ENCODE measurements at regions of chr6 and their contacts with region 1.

Region 1: GRCh38 chr6:161370880-161371279 is 97.0 kb upstream of the AGPAT4 start:
- DNase-seq: peak; percentile 77 to 89 (median 84)
- ATAC-seq: peak; percentile 76
- H3K4me3 ChIP-seq: no peak overlapping the region
- H3K27ac ChIP-seq: no peak overlapping the region
- H3K4me1 ChIP-seq: peaks cover 11% of the 10 kb centered on the region in 2 experiments; a peak in 4 of 5 replicates
- H3K27me3 ChIP-seq: no peaks in the 10 kb centered on the region; a peak in 1 of 5 replicates
- CTCF ChIP-seq: peak; percentile 93 to 98 (median 98)
- EP300 ChIP-seq: no peak
- POLR2A ChIP-seq: no peak
- RAD21 ChIP-seq: peak; percentile 98 to 99

Region 2: DNA sequence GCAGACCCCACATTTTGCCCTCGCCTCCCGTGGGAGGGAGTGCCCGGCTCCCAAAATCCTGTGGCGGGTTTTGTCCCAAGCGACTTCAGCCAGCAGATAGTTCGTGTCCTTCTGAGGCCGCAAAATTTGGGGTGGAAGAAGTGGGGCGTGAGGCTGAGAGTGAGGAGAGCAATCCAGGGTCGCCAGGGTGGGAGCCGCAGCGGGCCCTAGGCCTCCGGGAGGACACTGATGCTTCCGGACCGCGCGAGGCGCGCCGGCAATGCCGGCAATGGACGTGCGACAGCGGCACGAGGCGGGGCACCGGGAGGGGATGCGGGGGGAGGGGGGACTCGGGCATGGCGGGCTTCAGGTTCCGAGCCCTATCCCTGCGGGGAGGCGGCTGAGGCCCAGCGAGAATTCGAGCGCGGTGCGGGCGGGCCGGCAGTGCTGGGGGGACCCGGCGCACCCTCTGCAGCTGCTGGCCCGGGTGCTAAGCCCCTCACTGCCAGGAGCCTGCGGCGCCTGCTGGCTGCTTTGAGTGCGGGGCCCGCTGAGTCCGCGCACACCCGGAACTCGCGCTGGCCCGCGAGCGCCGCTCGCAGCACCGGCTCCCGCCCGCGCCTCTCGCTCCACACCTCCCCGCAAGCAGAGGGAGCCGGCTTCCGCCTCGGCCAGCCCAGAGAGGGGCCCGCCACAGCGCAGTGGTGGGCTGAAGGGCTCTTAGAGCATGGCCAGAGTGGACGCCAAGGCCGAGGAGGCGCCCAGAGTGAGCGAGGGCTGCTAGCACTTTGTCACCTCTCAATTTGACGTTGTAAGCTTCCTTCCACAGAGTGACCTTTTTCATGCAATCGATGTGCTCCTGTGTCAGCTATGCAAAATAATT is 850.6 kb before region 1 on chr6:
- CTCF ChIA-PET with region 1: interaction called, 4 read pairs
- POLR2A ChIA-PET with region 1: no interaction called
- in situ Hi-C with region 1: loop called (anchors 10 kb)
- intact Hi-C with region 1: loop called (anchors 2 kb)
- DNase-seq: peak; percentile 84 to 86 (median 85)
- ATAC-seq: peak; percentile 94
- H3K4me3 ChIP-seq: peak overlapping the region; percentile 54
- H3K27ac ChIP-seq: peak overlapping the region; percentile 43; the same call in 2 of the 3 replicates
- H3K4me1 ChIP-seq: peaks cover 3 to 9% of the 10 kb centered on the region in 2 experiments; a peak in 3 of 5 replicates
- H3K27me3 ChIP-seq: no peaks in the 10 kb centered on the region
- CTCF ChIP-seq: peak; percentile 4 to 58 (median 32); a peak in 5 of 6 replicates
- EP300 ChIP-seq: no peak; the same call in 1 of the 2 replicates
- POLR2A ChIP-seq: peak; percentile 65; the same call in 1 of the 2 replicates
- RAD21 ChIP-seq: peak; percentile 85 to 90

Region 3: DNA sequence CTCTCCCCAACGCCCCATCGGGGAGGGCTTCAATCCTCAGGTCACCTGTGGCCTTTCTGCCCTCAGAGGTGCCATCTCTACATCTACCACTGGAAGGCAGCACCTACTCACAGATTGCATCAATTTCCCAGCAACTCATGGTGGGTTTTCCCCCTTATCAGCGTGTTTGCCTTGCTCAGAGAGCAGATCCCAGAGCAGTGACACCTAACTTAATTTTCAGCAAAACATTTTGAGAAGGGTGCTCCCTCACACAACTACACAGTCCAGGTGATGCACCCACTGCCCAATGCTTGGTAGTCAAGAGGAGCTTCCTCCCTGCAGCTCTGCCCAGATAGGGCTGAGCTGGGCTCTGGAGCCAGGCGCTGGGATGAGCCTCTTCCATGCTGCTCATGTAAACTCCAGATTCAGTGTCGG is 620.6 kb before region 1 on chr6:
- CTCF ChIA-PET with region 1: interaction called, 3 read pairs
- POLR2A ChIA-PET with region 1: interaction called, 3 read pairs
- in situ Hi-C with region 1: no loop called
- intact Hi-C with region 1: loop called (anchors 1 kb)
- DNase-seq: peak; percentile 41 to 65 (median 45)
- ATAC-seq: peak; percentile 91
- H3K4me3 ChIP-seq: no peak overlapping the region
- H3K27ac ChIP-seq: no peak overlapping the region
- H3K4me1 ChIP-seq: no peaks in the 10 kb centered on the region; a peak in 1 of 5 replicates
- H3K27me3 ChIP-seq: no peaks in the 10 kb centered on the region
- CTCF ChIP-seq: peak; percentile 73 to 92 (median 80)
- EP300 ChIP-seq: no peak
- POLR2A ChIP-seq: no peak
- RAD21 ChIP-seq: peak; percentile 69 to 82

Region 4: DNA sequence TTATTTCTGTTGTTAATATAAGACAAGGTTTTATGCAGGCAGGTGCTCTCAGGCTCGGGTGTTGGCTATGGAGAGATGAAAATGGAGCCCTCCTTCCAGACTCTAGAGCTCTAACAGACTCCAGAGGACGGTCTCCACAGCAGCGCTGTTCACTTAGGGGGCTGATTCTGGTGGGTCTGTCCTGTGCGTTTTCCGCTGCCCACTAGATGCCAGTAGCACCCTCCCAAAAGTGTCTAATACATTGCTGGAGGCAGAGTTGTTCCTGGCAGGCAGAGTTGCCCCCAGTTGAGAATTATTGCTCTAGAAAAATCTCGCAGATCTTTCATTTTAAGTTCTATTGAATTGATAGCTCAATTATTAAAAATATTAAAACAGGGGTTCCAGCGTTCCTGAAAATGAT is 269.4 kb before region 1 on chr6:
- CTCF ChIA-PET with region 1: interaction called, 6 read pairs
- POLR2A ChIA-PET with region 1: interaction called, 6 read pairs
- in situ Hi-C with region 1: no loop called
- intact Hi-C with region 1: loop called (anchors 1 kb)
- DNase-seq: peak in 1 of 4 experiments; percentile 32
- ATAC-seq: peak; percentile 80
- H3K4me3 ChIP-seq: no peak overlapping the region
- H3K27ac ChIP-seq: no peak overlapping the region
- H3K4me1 ChIP-seq: 0 out of 5 replicates have a peak, but pooled peaks cover 0 to 3% of the 10 kb centered on the region in 2 experiments
- H3K27me3 ChIP-seq: no peaks in the 10 kb centered on the region
- CTCF ChIP-seq: peak; percentile 52 to 64 (median 62)
- EP300 ChIP-seq: no peak
- POLR2A ChIP-seq: no peak
- RAD21 ChIP-seq: peak; percentile 45 to 65

Region 5: DNA sequence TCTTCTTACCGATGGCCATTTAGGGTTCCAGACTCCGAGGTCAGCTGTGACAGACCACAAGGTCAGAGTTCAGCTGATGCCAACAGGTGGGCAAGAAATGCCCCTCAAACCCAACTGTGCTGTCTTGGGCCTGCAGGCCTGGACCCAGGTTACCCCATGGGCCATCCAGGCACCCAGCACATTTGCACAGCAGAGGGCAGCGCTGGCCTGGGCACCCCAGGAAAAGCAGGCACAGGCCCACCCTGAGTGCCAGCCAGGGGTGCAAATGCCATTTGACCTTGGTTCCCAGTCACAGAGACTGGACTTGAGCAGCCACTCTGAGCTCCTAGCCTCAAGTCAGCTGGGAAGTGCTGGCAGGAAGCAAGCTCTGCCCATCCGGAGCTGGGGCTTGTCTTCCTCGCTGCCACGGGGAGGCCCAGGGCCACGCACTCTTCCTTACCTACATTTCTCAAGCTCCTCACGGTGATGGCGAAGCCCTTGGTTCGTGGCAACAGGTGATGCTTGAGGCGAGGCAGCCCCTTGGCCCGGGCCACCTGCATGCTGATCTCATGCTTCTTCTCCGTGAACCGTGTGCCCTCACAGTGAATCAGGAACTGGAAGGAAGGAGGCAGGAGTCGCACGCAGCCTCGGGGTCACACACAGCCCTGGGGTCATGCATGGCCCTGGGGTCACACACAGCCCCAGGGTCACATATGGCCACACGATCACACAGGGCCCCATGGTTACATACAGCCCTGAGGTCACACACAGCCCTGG is 217.8 kb before region 1 on chr6:
- CTCF ChIA-PET with region 1: interaction called, 6 read pairs
- POLR2A ChIA-PET with region 1: no interaction called
- in situ Hi-C with region 1: loop called (anchors 5 kb)
- intact Hi-C with region 1: loop called (anchors 5 kb)
- DNase-seq: peak in 1 of 4 experiments; percentile 50
- ATAC-seq: peak; percentile 57
- H3K4me3 ChIP-seq: no peak overlapping the region
- H3K27ac ChIP-seq: no peak overlapping the region
- H3K4me1 ChIP-seq: peaks cover 12 to 40% of the 10 kb centered on the region in 2 experiments; a peak in 4 of 5 replicates
- H3K27me3 ChIP-seq: peaks cover 0 to 5% of the 10 kb centered on the region in 2 experiments; a peak in 1 of 5 replicates
- CTCF ChIP-seq: peak; percentile 56 to 67 (median 65)
- EP300 ChIP-seq: no peak
- POLR2A ChIP-seq: no peak
- RAD21 ChIP-seq: peak; percentile 68 to 86

Region 6: DNA sequence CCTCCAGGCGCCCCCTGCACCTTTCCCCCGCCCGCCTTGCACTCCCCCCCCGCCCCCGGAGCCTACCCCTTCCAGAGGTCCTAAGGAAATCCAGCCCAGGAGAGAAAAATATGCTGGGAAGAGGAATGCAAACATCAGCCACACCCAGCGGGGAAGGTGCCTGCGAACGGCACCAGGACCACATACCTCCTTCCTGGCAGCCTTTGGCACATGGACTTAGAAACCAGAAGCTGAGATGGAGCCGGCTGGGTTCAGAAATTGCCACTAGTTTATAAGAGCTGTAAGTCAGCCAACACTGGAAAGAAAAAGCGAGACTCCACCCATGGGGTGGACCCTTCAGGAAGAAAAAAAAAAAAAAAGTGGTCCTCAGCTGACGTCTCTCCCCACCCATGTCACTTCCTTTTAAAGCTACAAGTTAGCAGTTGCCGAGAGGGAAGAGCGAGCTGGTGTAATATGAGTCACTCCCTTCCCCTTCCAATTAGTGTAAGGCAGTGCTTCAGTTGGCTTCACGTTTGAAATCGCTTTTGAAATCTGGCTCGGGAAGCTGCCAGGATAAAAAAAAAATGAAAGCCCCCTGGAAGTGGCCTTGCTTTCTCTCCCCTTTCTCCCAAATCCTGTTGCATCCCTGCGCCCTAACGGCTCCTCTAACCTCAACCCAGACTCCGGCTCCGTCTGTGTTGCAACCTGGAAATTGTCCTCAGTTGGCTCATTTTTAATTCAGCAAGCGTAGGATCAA is 97.0 kb before region 1 on chr6 and contains the start of gene AGPAT4:
- CTCF ChIA-PET with region 1: no interaction called
- POLR2A ChIA-PET with region 1: interaction called, 3 read pairs
- in situ Hi-C with region 1: no loop called
- intact Hi-C with region 1: loop called (anchors 5 kb)
- DNase-seq: peak; percentile 87 to 97 (median 92)
- ATAC-seq: peak; percentile 95
- H3K4me3 ChIP-seq: peak within 1 kb of the TSS; percentile 58
- H3K27ac ChIP-seq: peak within 1 kb of the TSS; percentile 75
- H3K4me1 ChIP-seq: peaks cover 4 to 31% of the 10 kb centered on the region in 2 experiments
- H3K27me3 ChIP-seq: no peaks in the 10 kb centered on the region
- CTCF ChIP-seq: no peak
- EP300 ChIP-seq: peak; percentile 52
- POLR2A ChIP-seq: peak; percentile 77
- RAD21 ChIP-seq: no peak
- polyA plus RNA-seq, gene AGPAT4: 2.2 to 3.4 TPM

Region 7: GRCh38 chr6:161318456-161318855 is 52.4 kb before region 1 on chr6:
- CTCF ChIA-PET with region 1: no interaction called
- POLR2A ChIA-PET with region 1: no interaction called
- in situ Hi-C with region 1: no loop called
- intact Hi-C with region 1: no loop called
- DNase-seq: no peak
- ATAC-seq: no peak
- H3K4me3 ChIP-seq: no peak overlapping the region
- H3K27ac ChIP-seq: no peak overlapping the region
- H3K4me1 ChIP-seq: peaks cover 0 to 4% of the 10 kb centered on the region in 2 experiments; a peak in 1 of 5 replicates
- H3K27me3 ChIP-seq: no peaks in the 10 kb centered on the region
- CTCF ChIP-seq: no peak
- EP300 ChIP-seq: no peak
- POLR2A ChIP-seq: no peak
- RAD21 ChIP-seq: no peak

Measured in K562 (cell line).